ENCODE measurements at regions of chr2 and their contacts with region 1.

Region 1: GRCh38 chr2:201860636-201861066 is 54.3 kb downstream of the CDK15 start:
- DNase-seq: peak in 6 of 10 donors; percentile 24 to 75 (median 44)
- H3K4me3 ChIP-seq: peak overlapping the region in 16 of 59 donors; percentile 6 to 40 (median 22)
- H3K27ac ChIP-seq: peak overlapping the region in 1 of 59 donors; percentile 45
- H3K27me3 ChIP-seq: peaks cover 0 to 18% (median 0%) of the 10 kb centered on the region in 45 donors
- CTCF ChIP-seq: peak; percentile 75 to 100 (median 93)

Region 2: GRCh38 chr2:201984800-201985525 is 124.3 kb after region 1 on chr2:
- intact Hi-C with region 1: loop called in 1 of 2 experiments (anchors 10 kb)
- DNase-seq: peak; percentile 83 to 95 (median 91)
- H3K4me3 ChIP-seq: peak overlapping the region in 5 of 59 donors; percentile 3 to 29 (median 8)
- H3K27ac ChIP-seq: peak overlapping the region in 43 of 59 donors; percentile 0 to 88 (median 48)
- H3K27me3 ChIP-seq: peaks cover 0 to 14% (median 0%) of the 10 kb centered on the region in 45 donors
- CTCF ChIP-seq: peak in 37 of 56 donors; percentile 7 to 60 (median 30)

Region 3: DNA sequence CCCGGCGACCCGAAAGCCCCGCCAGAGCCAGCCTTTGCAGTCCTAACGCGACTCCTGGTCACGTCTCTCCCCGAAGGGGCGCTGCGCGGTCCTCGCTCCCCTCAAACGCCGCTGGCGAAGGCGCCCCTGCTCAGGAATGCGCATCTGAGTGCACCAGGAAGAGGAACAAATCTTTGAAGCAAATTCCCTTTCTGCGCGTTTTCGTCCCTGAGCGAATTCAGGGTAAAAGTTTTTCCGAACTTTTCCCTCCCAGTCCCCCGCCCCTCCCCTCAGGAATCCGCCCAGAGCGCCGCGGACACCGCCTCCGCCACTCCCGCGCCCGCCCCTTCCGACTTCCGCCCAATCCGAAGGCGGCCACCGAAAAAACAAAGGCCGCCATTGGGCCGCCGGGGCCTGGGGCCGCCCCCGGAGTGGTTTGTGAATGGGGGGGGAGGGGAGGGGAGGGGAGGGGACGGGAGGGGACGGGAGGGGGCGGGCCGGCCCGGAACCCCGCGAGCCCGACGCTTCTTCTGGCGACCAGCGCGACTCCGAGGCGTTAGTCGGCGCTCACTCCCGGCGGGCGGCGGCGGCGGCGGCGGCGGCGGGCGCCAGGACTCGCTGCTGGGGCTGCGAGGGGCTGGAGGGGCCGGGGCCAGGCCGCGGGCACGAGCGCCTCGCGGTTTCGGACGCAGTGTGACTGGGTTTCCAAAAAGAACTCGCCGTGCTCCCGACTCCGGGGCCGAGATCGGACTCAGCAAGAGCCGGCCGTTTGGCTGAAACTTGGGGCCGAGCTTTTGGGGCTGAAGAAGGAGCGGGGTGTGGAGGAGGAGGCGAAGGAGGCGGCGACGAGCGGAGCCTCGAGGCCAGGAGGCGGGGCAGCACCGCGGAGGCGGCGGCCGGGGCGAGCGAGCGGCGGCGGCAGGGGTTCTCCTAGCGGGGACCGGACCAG is 172.9 kb after region 1 on chr2 and contains the start of gene FZD7:
- intact Hi-C with region 1: loop called in 1 of 2 experiments (anchors 5 kb)
- DNase-seq: peak; percentile 59 to 94 (median 68)
- H3K4me3 ChIP-seq: peak within 1 kb of the TSS; percentile 44 to 83 (median 67)
- H3K27ac ChIP-seq: peak within 1 kb of the TSS in 55 of 59 donors; percentile 7 to 93 (median 74)
- H3K27me3 ChIP-seq: peaks cover 0 to 81% (median 30%) of the 10 kb centered on the region in 45 donors
- CTCF ChIP-seq: peak in 6 of 56 donors; percentile 4 to 35 (median 10)
- total RNA-seq, gene FZD7: 1.3 to 9.9 (median 4.1) TPM

Region 4: DNA sequence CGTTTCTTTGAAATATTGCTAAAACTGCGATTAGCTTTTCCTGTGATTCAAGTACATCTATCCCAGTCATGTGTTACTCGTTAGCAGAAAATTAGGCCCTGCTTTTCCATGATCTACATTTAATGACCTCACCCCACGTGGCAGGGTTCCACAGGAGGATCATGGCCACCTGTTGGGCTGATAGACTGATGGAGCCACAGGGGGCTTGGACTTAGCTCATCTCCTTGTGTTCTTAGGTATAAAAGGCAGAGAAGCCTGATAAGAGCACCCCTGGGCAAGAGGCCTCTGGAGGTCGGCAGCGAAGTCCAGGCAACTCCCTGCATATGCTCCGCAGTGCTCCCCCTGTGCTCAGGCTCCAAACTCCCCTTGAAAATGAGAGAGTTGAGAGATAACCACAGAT is 185.9 kb after region 1 on chr2:
- intact Hi-C with region 1: no loop called
- DNase-seq: no peak
- H3K4me3 ChIP-seq: no peak overlapping the region
- H3K27ac ChIP-seq: no peak overlapping the region
- H3K27me3 ChIP-seq: peaks cover 0 to 9% (median 0%) of the 10 kb centered on the region in 45 donors
- CTCF ChIP-seq: no peak

Region 5: DNA sequence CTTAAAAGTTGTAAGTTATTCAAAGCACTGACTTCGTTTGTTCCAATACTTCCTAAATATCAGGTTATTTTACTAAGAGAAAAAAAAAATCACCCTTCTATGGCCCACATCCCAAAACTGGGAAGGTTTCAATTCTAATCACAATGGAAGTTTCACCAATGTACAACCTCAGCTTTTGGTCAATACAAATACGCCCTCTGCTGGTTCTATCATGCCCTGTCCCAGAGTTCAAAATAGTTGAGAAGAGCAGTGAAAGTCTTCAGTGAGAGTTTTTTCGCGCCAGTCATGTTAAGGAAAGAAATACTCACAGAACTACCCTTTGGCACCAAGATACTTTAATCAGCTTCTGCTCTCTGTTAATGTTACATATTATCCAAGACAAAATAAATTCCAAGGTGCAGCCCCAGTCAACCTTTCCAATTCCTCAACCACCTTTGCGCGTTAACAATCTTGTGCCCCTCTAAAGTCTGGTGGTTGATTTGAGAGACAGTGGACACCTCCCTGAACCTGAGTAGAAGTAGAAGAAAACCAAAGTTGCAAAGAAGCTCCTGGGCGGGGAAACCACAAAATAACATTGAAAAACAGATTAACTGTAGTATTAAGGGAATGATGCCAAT is 317.8 kb after region 1 on chr2:
- intact Hi-C with region 1: loop called (anchors 2 to 5 kb)
- DNase-seq: peak in 4 of 10 donors; percentile 22 to 71 (median 59)
- H3K4me3 ChIP-seq: no peak overlapping the region
- H3K27ac ChIP-seq: no peak overlapping the region
- H3K27me3 ChIP-seq: no peaks in the 10 kb centered on the region
- CTCF ChIP-seq: peak; percentile 70 to 98 (median 91)

Region 6: DNA sequence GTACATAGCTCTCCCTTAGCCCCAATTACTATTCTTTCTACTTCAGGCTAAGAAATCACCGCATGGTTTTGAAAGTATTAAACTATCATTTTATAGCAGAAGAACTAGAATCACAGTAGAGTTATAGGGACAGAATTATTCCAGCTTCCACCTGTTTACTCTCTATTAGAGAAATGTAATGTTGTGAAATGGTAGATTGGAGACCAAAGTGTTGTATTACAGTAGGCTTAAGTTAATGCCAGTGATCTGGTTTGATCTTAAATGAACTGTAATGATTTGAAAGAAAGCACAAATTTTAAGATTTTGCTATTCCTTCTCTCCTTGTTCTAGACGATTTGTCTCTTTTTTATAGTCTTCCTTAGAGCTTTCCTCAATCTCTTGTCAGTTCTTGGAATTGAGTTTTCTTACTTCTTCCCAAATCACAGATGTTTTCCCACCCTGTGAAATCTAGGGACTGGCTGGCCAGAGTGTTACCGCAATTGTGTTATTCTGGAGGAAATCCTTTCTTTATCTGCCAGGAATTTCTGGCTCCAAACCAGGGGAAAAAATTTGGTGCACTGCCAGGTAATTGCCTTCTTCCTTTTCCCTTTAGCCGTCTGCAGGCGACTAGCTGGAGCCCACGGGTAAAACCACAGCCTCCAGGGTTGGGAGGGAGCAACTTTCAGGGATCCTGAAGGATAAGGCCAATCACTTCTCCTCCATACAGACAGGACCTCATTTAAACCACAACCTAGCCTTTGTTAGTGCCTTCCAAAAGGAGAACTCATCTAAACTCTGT is 456.6 kb after region 1 on chr2:
- intact Hi-C with region 1: no loop called
- DNase-seq: peak in 2 of 10 donors; percentile 8 to 34
- H3K4me3 ChIP-seq: no peak overlapping the region
- H3K27ac ChIP-seq: peak overlapping the region in 13 of 59 donors; percentile 2 to 62 (median 21)
- H3K27me3 ChIP-seq: no peaks in the 10 kb centered on the region
- CTCF ChIP-seq: no peak